Activated CD8-positive, alpha-beta T cell treated with anti-CD3 and anti-CD28 coated beads, Interleukin-2, amount 10 ng/mL, durations not matched to agents 7 days and 5 days (primary cell): ENCODE measurements at regions of chr15 and their contacts with region 1.

Region 1: GRCh38 chr15:66497502-66498455 is at the start of gene SNAPC5:
- DNase-seq: peak; percentile 99
- ATAC-seq: peak; percentile 92
- H3K4me3 Mint-ChIP-seq: peak within 1 kb of the TSS; percentile 97
- H3K27ac Mint-ChIP-seq: peak within 1 kb of the TSS; percentile 98
- H3K4me1 Mint-ChIP-seq: peaks cover 63% of the 10 kb centered on the region
- H3K27me3 Mint-ChIP-seq: no peaks in the 10 kb centered on the region
- total RNA-seq, gene SNAPC5: 25.0 to 25.7 TPM

Region 2: GRCh38 chr15:66293419-66294156 is 204.2 kb before region 1 on chr15 and contains the start of gene DIS3L:
- CTCF ChIA-PET with region 1: interaction called, 53 read pairs
- POLR2A ChIA-PET with region 1: interaction called, 7 read pairs
- DNase-seq: peak; percentile 56
- ATAC-seq: peak; percentile 82
- H3K4me3 Mint-ChIP-seq: peak within 1 kb of the TSS; percentile 84
- H3K27ac Mint-ChIP-seq: peak within 1 kb of the TSS; percentile 90
- H3K4me1 Mint-ChIP-seq: peaks cover 50% of the 10 kb centered on the region
- H3K27me3 Mint-ChIP-seq: no peaks in the 10 kb centered on the region
- total RNA-seq, gene DIS3L: 23.6 to 24.3 TPM

Region 3: DNA sequence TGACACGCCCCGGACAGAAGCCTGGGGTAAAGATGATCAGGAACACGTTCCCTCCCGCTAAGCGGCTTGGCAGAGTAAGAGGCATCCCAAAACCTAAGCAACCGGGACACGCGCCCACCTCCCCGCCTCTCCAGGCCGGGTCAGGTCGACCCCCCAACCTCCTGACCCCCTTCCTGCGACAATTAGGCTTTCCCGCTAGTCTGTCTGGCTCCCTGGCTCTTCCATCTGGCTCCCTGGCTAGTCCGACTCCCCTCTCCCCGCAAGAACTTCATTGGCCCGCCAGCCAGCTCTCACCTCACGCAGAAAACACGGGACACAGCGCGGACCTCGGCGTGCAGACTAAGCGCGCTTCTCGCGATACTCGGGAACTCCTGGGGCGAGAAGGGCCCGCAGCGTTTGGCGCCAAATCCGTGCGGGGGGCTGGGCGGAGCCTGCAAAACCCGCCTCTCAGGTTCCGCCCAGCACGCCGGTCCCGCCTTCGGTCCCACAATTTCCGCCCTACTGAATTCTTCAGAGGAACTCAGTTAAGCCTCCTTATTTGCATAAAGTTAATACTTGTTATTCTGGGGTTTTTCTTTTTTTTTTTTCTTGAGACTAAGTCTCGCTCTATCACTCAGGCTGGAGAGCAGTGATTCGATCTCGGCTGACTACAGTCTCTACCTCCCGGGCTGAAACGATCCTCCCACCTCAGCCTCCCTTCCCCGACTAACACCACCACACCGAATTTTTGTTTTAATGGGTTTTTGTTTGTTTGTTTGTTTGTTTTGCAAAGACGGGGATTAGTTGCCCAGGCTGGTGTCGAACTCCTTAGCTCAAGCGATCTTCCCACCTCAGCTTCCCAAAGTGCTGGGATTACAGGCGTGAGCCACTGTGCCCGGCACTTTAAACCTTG is 141.2 kb before region 1 on chr15 and contains the start of gene TIPIN:
- CTCF ChIA-PET with region 1: interaction called, 56 read pairs
- POLR2A ChIA-PET with region 1: interaction called, 40 read pairs
- DNase-seq: peak; percentile 99
- ATAC-seq: peak; percentile 99
- H3K4me3 Mint-ChIP-seq: peak within 1 kb of the TSS; percentile 95
- H3K27ac Mint-ChIP-seq: peak within 1 kb of the TSS; percentile 97
- H3K4me1 Mint-ChIP-seq: peaks cover 42% of the 10 kb centered on the region
- H3K27me3 Mint-ChIP-seq: no peaks in the 10 kb centered on the region
- total RNA-seq, gene TIPIN: 36.4 to 42.7 TPM

Region 4: DNA sequence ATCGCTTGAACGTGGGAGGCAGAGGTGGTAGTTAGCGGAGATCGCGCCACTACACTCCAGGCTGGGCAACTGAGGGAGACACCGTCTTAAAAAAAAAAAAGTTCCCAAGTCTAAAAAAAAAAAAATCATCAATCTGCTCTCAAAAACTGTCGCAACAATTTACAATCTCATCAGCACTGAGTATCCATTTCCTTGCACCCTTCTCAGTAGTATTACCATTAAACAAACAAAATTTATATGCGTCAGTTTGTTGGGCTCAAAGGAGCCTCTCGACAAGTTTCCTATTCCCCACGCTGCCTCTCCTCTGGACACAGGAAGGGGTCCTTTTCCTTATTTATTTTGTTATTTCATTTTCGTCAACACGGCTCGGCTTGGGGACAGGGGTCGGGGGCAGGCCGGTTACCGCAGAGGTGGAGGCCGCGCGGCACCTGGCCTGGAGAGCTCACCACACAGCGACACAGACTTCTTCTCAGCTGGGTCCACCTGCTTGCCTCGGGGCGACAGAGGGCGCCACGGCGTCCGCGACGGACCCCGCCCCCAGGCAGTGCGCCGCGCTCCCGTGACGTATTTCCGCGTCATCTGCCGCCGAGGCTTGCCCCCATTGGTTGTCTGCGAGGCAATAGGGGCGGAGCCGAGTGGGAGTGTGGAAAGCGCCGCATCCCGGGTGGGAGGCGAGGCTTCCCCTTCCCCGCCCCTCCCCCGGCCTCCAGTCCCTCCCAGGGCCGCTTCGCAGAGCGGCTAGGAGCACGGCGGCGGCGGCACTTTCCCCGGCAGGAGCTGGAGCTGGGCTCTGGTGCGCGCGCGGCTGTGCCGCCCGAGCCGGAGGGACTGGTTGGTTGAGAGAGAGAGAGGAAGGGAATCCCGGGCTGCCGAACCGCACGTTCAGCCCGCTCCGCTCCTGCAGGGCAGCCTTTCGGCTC is 111.3 kb before region 1 on chr15 and contains the start of gene MAP2K1:
- CTCF ChIA-PET with region 1: interaction called, 126 read pairs
- POLR2A ChIA-PET with region 1: interaction called, 35 read pairs
- DNase-seq: peak; percentile 99
- ATAC-seq: peak; percentile 83
- H3K4me3 Mint-ChIP-seq: peak within 1 kb of the TSS; percentile 95
- H3K27ac Mint-ChIP-seq: peak within 1 kb of the TSS; percentile 98
- H3K4me1 Mint-ChIP-seq: peaks cover 45% of the 10 kb centered on the region
- H3K27me3 Mint-ChIP-seq: no peaks in the 10 kb centered on the region
- total RNA-seq, gene MAP2K1: 108 to 118 TPM

Region 5: DNA sequence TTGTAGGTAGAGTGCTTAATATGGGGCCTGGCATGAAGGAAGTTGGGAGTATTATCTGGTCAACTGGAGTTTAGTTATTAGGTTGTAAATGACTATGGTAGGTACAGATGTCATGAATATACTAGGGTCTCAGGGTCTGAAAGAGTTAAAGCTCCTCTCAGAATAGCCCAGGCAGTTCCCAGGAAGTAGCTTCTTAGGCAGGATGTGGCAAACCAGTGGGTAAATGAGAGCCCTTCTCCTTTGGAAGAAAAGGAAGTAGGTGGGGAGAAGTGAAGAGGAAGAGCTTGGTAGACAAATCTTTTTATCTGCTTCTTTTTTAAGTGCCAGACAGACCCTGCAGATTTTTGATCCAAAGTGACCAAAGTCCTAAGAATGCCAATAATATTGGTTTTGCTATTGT is 86.6 kb before region 1 on chr15:
- CTCF ChIA-PET with region 1: interaction called, 87 read pairs
- POLR2A ChIA-PET with region 1: interaction called, 3 read pairs
- DNase-seq: peak; percentile 46
- ATAC-seq: peak; percentile 57
- H3K4me3 Mint-ChIP-seq: peak overlapping the region; percentile 67
- H3K27ac Mint-ChIP-seq: peak overlapping the region; percentile 79
- H3K4me1 Mint-ChIP-seq: peaks cover 88% of the 10 kb centered on the region
- H3K27me3 Mint-ChIP-seq: no peaks in the 10 kb centered on the region

Region 6: DNA sequence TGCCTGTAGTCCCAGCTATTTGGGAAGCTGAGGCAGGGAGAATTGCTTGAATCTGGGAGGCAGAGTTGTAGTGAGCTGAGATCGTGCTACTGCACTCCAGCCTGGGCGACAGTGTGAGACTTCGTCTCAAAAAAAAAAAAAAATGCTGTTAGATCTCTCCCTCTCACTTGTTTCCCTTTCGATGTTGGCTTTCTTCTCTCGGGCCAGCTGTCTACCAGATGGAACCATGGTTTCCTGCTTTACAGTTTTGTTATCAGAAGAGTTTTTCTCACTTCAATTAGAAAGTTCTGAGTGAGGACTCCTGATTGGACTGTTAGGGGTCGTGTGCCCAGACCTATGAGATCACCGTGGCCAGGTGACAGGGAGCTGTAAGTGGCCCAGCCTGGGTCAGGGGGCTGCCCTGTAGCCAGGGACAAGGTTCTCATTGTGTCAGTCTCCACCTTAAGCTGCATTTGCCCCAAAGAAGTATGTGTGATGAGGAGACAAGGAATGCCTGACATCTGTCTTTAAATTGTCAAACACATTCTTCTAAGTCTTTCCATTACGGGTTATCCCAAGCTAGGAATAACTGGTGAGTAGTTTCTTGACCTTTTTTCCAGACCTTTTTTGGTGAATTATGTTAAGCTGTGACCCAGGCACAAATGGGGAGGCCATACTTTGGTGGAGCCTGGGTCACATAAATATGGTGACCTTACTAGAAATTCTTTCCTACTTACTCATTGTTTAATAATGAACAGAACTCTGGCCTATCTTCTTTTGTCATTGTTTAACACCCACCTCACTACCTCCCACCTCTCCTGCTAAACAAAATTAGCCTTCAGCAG is 25.4 kb before region 1 on chr15:
- CTCF ChIA-PET with region 1: interaction called, 50 read pairs
- POLR2A ChIA-PET with region 1: interaction called, 12 read pairs
- DNase-seq: peak; percentile 74
- ATAC-seq: peak; percentile 98
- H3K4me3 Mint-ChIP-seq: peak overlapping the region; percentile 26
- H3K27ac Mint-ChIP-seq: peak overlapping the region; percentile 77
- H3K4me1 Mint-ChIP-seq: peaks cover 40% of the 10 kb centered on the region
- H3K27me3 Mint-ChIP-seq: no peaks in the 10 kb centered on the region

Region 7: DNA sequence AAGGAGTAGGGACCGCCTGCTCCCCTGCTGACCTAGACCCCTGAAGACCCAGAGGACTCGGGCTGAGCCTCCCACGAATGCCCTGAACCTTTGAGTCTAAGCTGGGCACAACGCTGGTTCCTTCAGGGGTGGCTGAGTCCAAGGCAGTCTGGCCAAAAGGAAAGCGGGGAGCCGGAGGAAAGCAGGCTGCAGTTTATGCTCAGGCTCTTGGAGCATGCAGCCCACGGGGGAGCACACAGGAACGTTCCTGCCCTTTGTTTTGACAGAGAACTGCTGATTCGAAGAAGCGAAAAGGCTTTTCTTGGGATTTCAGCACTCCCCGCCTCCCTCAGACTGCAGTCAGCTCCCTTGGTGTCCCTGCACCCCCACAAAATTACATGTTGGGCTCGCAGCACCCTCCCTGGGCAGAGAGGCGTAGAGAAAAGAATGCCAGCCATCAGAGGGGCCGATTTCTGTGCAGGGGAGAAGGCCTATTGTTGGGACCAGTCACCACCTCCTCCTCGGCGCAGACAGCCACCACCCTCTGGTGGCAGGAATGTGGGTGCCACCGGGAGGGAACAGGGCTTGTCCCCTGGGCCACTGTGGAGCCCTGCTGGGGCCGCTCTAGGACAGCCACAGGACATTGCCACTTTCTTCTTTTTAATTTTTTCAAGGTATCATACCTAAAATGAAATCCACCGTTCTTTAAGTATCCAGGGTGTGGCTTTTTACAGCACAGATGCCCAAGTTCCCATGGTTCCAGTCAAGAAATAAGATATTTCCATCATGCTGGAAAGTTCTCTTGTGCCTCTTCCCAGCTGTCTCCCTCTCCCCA is 276.4 kb after region 1 on chr15:
- CTCF ChIA-PET with region 1: no interaction called
- POLR2A ChIA-PET with region 1: no interaction called
- DNase-seq: peak; percentile 64
- ATAC-seq: peak; percentile 80
- H3K4me3 Mint-ChIP-seq: no peak overlapping the region
- H3K27ac Mint-ChIP-seq: no peak overlapping the region
- H3K4me1 Mint-ChIP-seq: no peaks in the 10 kb centered on the region
- H3K27me3 Mint-ChIP-seq: peaks cover 2% of the 10 kb centered on the region